GM12878 (cell line): ENCODE measurements at regions of chr3 and their contacts with region 1.

Region 1: GRCh38 chr3:160003520-160004128 is 15.0 kb downstream of the IL12A start:
- DNase-seq: no peak
- ATAC-seq: peak; percentile 96
- H3K4me3 ChIP-seq: no peak overlapping the region
- H3K27ac ChIP-seq: no peak overlapping the region
- H3K4me1 ChIP-seq: peaks cover 6% of the 10 kb centered on the region; the same call in 1 of the 2 replicates
- H3K27me3 ChIP-seq: no peaks in the 10 kb centered on the region
- CTCF ChIP-seq: peak; percentile 65 to 75 (median 75)
- EP300 ChIP-seq: no peak
- POLR2A ChIP-seq: no peak
- RAD21 ChIP-seq: peak; percentile 81

Region 2: DNA sequence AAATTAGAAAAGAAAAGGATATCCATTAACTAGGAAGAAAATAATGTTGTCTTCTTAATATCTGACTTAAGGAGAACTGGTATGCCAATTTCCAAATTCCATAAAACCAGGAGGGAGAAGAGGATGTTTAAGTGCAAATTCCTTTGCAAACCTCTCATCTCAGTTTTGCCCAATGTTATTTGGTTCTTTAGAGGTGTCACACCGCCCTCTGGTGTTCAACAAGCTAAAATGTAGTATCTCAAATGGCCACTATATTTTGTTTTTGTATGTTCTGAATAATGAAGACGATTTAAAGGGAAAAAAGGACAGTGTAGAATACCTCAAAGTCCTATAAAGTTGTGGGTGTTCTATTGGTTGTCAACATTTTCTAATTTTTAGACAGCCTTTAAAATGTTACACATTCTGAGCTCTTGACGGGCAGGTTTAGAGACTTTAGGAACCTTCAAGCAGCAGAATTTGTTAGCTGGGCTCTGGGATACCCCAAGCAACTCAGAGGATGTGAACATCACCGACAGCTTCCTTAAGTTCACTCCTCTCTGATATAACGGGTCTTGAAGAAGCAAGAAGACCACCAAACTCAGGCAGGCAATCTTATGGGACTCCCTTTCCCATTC is 743.5 kb before region 1 on chr3:
- CTCF ChIA-PET with region 1: interaction called, 3 read pairs
- POLR2A ChIA-PET with region 1: no interaction called
- RAD21 ChIA-PET with region 1: no interaction called
- SMC1A ChIA-PET with region 1: no interaction called
- in situ Hi-C with region 1: no loop called
- intact Hi-C with region 1: loop called (anchors 10 kb)
- DNase-seq: no peak
- ATAC-seq: peak; percentile 79
- H3K4me3 ChIP-seq: no peak overlapping the region
- H3K27ac ChIP-seq: no peak overlapping the region
- H3K4me1 ChIP-seq: no peaks in the 10 kb centered on the region
- H3K27me3 ChIP-seq: no peaks in the 10 kb centered on the region; a peak in 1 of 4 replicates
- CTCF ChIP-seq: peak; percentile 50 to 70 (median 59); a peak in 5 of 6 replicates
- EP300 ChIP-seq: no peak
- POLR2A ChIP-seq: no peak
- RAD21 ChIP-seq: peak; percentile 91

Region 3: GRCh38 chr3:159828542-159828943 is 175.1 kb before region 1 on chr3:
- CTCF ChIA-PET with region 1: interaction called, 129 read pairs
- POLR2A ChIA-PET with region 1: no interaction called
- RAD21 ChIA-PET with region 1: interaction called, 29 read pairs
- SMC1A ChIA-PET with region 1: interaction called, 43 read pairs
- in situ Hi-C with region 1: no loop called
- intact Hi-C with region 1: loop called (anchors 1 kb)
- DNase-seq: no peak
- ATAC-seq: peak; percentile 82
- H3K4me3 ChIP-seq: no peak overlapping the region
- H3K27ac ChIP-seq: no peak overlapping the region
- H3K4me1 ChIP-seq: peaks cover 13% of the 10 kb centered on the region
- H3K27me3 ChIP-seq: no peaks in the 10 kb centered on the region
- CTCF ChIP-seq: peak; percentile 41 to 52 (median 49); a peak in 5 of 6 replicates
- EP300 ChIP-seq: no peak
- POLR2A ChIP-seq: no peak
- RAD21 ChIP-seq: peak; percentile 55

Region 4: DNA sequence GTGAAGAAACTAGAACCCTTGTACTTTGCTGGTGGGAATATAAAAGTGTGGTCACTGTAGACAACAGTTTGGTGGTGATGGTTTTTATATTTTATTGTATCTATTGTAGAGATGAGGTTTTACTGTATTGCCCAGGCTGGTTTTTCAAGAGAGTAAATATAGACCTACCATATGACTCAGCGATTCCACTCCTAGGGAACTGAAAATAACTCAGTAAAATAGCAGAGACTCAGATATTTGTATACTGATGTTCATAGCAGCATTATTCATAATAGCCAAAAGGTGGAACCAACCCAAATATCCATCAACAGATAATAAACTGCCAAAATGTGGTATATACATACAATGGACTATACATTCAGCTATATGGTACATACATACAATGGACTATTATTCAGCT is 83.8 kb before region 1 on chr3:
- CTCF ChIA-PET with region 1: interaction called, 16 read pairs
- POLR2A ChIA-PET with region 1: no interaction called
- RAD21 ChIA-PET with region 1: interaction called, 3 read pairs
- SMC1A ChIA-PET with region 1: interaction called, 10 read pairs
- in situ Hi-C with region 1: no loop called
- intact Hi-C with region 1: no loop called
- DNase-seq: no peak
- ATAC-seq: peak; percentile 81
- H3K4me3 ChIP-seq: no peak overlapping the region
- H3K27ac ChIP-seq: peak overlapping the region; percentile 22; the same call in 1 of the 2 replicates
- H3K4me1 ChIP-seq: peaks cover 46% of the 10 kb centered on the region
- H3K27me3 ChIP-seq: no peaks in the 10 kb centered on the region
- CTCF ChIP-seq: no peak
- EP300 ChIP-seq: peak; percentile 75 to 80; a peak in 3 of 4 replicates
- POLR2A ChIP-seq: no peak
- RAD21 ChIP-seq: 0 out of 2 replicates have a peak, but pooled peaks have one; percentile 2

Region 5: GRCh38 chr3:159964166-159964973 is 39.3 kb before region 1 on chr3:
- CTCF ChIA-PET with region 1: interaction called, 18 read pairs
- POLR2A ChIA-PET with region 1: no interaction called
- RAD21 ChIA-PET with region 1: interaction called, 4 read pairs
- SMC1A ChIA-PET with region 1: interaction called, 7 read pairs
- in situ Hi-C with region 1: no loop called
- intact Hi-C with region 1: no loop called
- DNase-seq: peak; percentile 74
- ATAC-seq: peak; percentile 97
- H3K4me3 ChIP-seq: peak overlapping the region; percentile 60; the same call in 1 of the 2 replicates
- H3K27ac ChIP-seq: peak overlapping the region; percentile 71
- H3K4me1 ChIP-seq: peaks cover 11% of the 10 kb centered on the region; the same call in 1 of the 2 replicates
- H3K27me3 ChIP-seq: no peaks in the 10 kb centered on the region
- CTCF ChIP-seq: no peak
- EP300 ChIP-seq: peak in 1 of 2 experiments; percentile 92; a peak in 2 of 4 replicates
- POLR2A ChIP-seq: no peak
- RAD21 ChIP-seq: no peak

Region 6: GRCh38 chr3:160027541-160028195 is 24.0 kb after region 1 on chr3:
- CTCF ChIA-PET with region 1: interaction called, 32 read pairs
- POLR2A ChIA-PET with region 1: no interaction called
- RAD21 ChIA-PET with region 1: interaction called, 5 read pairs
- SMC1A ChIA-PET with region 1: interaction called, 22 read pairs
- in situ Hi-C with region 1: no loop called
- intact Hi-C with region 1: no loop called
- DNase-seq: peak; percentile 55
- ATAC-seq: peak; percentile 89
- H3K4me3 ChIP-seq: no peak overlapping the region
- H3K27ac ChIP-seq: peak overlapping the region; percentile 94
- H3K4me1 ChIP-seq: peaks cover 26% of the 10 kb centered on the region
- H3K27me3 ChIP-seq: no peaks in the 10 kb centered on the region
- CTCF ChIP-seq: no peak
- EP300 ChIP-seq: peak; percentile 61 to 64; a peak in 2 of 4 replicates
- POLR2A ChIP-seq: no peak
- RAD21 ChIP-seq: no peak

Region 7: GRCh38 chr3:160061525-160061924 is 57.9 kb after region 1 on chr3:
- CTCF ChIA-PET with region 1: no interaction called
- POLR2A ChIA-PET with region 1: no interaction called
- RAD21 ChIA-PET with region 1: no interaction called
- SMC1A ChIA-PET with region 1: no interaction called
- in situ Hi-C with region 1: no loop called
- intact Hi-C with region 1: no loop called
- DNase-seq: no peak
- ATAC-seq: no peak
- H3K4me3 ChIP-seq: no peak overlapping the region
- H3K27ac ChIP-seq: no peak overlapping the region
- H3K4me1 ChIP-seq: no peaks in the 10 kb centered on the region
- H3K27me3 ChIP-seq: no peaks in the 10 kb centered on the region
- CTCF ChIP-seq: no peak
- EP300 ChIP-seq: no peak
- POLR2A ChIP-seq: no peak
- RAD21 ChIP-seq: no peak

Region 8: GRCh38 chr3:160343132-160343531 is 339.5 kb after region 1 on chr3:
- CTCF ChIA-PET with region 1: no interaction called
- POLR2A ChIA-PET with region 1: no interaction called
- RAD21 ChIA-PET with region 1: no interaction called
- SMC1A ChIA-PET with region 1: no interaction called
- in situ Hi-C with region 1: no loop called
- intact Hi-C with region 1: no loop called
- DNase-seq: no peak
- ATAC-seq: no peak
- H3K4me3 ChIP-seq: no peak overlapping the region
- H3K27ac ChIP-seq: no peak overlapping the region
- H3K4me1 ChIP-seq: no peaks in the 10 kb centered on the region
- H3K27me3 ChIP-seq: no peaks in the 10 kb centered on the region
- CTCF ChIP-seq: peak in 2 of 3 experiments; percentile 7 to 47; a peak in 2 of 6 replicates
- EP300 ChIP-seq: no peak
- POLR2A ChIP-seq: no peak
- RAD21 ChIP-seq: peak; percentile 61

Region 9: DNA sequence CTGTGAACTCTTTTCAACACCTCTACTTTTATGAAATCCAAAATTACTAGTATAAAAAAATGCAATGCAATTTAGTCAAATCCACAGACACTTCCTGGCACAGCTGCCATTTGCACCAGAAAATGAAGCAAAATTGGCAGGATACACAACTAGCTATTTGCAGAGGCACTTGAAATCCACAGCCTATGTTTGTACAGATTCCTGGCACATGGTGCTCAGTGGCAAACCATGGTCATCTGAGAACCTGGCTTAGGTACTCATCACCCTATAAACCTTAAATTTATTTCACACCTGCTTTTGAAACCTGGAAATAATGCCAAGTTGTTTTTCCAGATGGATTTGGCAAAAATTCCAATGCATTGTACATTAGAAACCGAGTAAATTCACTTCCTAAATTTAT is 732.2 kb after region 1 on chr3:
- CTCF ChIA-PET with region 1: no interaction called
- POLR2A ChIA-PET with region 1: no interaction called
- RAD21 ChIA-PET with region 1: no interaction called
- SMC1A ChIA-PET with region 1: no interaction called
- in situ Hi-C with region 1: no loop called
- intact Hi-C with region 1: no loop called
- DNase-seq: no peak
- ATAC-seq: no peak
- H3K4me3 ChIP-seq: no peak overlapping the region
- H3K27ac ChIP-seq: no peak overlapping the region
- H3K4me1 ChIP-seq: no peaks in the 10 kb centered on the region
- H3K27me3 ChIP-seq: peaks cover 0 to 3% of the 10 kb centered on the region in 2 experiments; a peak in 2 of 4 replicates
- CTCF ChIP-seq: no peak
- EP300 ChIP-seq: no peak
- POLR2A ChIP-seq: no peak
- RAD21 ChIP-seq: no peak

Region 10: DNA sequence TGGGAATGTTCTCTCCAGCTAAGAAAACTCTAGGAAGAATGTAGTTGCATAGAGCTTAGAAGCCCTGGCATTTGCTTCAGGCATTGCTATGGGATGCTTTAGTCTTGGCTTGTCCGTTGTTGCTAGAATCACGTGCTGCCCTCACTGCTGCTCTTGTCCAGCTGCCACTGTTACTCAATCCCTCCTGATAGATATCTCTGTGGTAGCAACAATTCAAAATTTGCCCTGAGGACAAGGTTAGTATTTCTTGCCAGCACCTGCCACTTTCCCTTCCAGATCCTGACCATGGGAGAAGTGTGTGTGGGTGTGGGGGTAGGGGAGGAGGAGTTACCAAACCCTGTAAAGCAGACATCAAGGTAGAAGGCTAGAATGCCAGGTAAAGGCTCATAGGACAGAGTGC is 866.2 kb after region 1 on chr3:
- CTCF ChIA-PET with region 1: no interaction called
- POLR2A ChIA-PET with region 1: no interaction called
- RAD21 ChIA-PET with region 1: no interaction called
- SMC1A ChIA-PET with region 1: no interaction called
- in situ Hi-C with region 1: no loop called
- intact Hi-C with region 1: no loop called
- DNase-seq: no peak
- ATAC-seq: no peak
- H3K4me3 ChIP-seq: no peak overlapping the region
- H3K27ac ChIP-seq: no peak overlapping the region
- H3K4me1 ChIP-seq: no peaks in the 10 kb centered on the region
- H3K27me3 ChIP-seq: no peaks in the 10 kb centered on the region
- CTCF ChIP-seq: no peak
- EP300 ChIP-seq: no peak
- POLR2A ChIP-seq: no peak
- RAD21 ChIP-seq: no peak